A673 (cell line): ENCODE measurements at regions of chr15 and their contacts with region 1.

Region 1: GRCh38 chr15:63157118-63157843 is at the start of gene RPS27L:
- DNase-seq: peak; percentile 97
- H3K4me3 ChIP-seq: peak within 1 kb of the TSS; percentile 96
- H3K27ac ChIP-seq: peak within 1 kb of the TSS; percentile 91
- H3K4me1 ChIP-seq: no peaks in the 10 kb centered on the region
- H3K27me3 ChIP-seq: no peaks in the 10 kb centered on the region
- CTCF ChIP-seq: no peak
- total RNA-seq, gene RPS27L: 64.2 and 65.6 TPM in 2 replicates

Region 2: GRCh38 chr15:62995047-62995674 is 162.1 kb before region 1 on chr15:
- CTCF ChIA-PET with region 1: no interaction called
- POLR2A ChIA-PET with region 1: no interaction called
- intact Hi-C with region 1: no loop called
- DNase-seq: no peak
- H3K4me3 ChIP-seq: no peak overlapping the region
- H3K27ac ChIP-seq: no peak overlapping the region
- H3K4me1 ChIP-seq: no peaks in the 10 kb centered on the region
- H3K27me3 ChIP-seq: no peaks in the 10 kb centered on the region
- CTCF ChIP-seq: no peak

Region 3: GRCh38 chr15:63402498-63403253 is 245.4 kb after region 1 on chr15:
- CTCF ChIA-PET with region 1: no interaction called
- POLR2A ChIA-PET with region 1: no interaction called
- intact Hi-C with region 1: loop called (anchors 5 kb)
- DNase-seq: peak; percentile 67
- H3K4me3 ChIP-seq: no peak overlapping the region
- H3K27ac ChIP-seq: no peak overlapping the region
- H3K4me1 ChIP-seq: peaks cover 25% of the 10 kb centered on the region
- H3K27me3 ChIP-seq: no peaks in the 10 kb centered on the region
- CTCF ChIP-seq: peak; percentile 68